Posterior cingulate gyrus (tissue), 11 donors: ENCODE measurements at regions of chr17 and their contacts with region 1.

Region 1: DNA sequence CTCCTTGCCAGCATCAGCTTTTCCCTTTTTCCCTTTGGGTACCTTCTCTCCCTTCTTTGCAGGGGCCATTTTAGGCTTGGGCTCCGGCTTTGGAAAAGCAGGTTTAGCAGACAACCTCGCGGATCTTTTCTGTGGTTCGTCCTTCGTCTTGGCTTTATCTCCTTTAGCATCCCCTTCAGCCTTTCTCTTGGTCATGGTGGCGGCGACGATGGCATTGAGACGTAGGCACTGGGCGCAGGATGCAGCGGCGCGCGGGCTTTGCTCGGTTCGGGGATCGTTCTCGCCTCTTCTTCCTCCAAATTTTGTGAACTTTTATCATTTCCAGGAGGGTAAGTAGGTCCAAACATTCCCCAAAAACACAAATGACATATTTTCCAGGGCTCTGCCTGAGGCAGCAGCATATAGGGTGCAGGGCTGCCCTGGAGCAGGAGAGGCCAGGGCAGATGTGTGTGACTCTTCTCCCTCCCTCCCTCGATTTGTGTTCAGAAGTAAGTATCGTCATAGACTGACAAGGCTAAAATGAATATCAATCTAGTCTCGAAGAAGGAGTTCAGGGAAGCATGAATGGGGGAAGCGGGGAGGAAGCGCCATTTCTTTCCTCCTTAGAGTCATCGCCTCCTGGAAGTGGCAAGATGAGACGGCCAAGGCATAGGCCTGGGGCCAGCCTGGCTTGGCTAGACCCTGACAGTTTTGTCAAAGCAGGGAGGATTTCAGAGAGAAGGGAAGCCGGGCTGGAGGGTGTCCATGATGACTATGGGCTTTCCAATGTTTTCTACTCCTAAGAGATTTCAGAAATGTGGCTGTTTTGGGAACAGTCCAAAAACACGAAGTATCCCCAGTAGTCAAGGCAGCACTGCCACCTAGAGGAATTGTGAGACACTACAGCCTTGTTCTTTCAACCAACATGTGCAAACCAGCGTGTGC is 13.2 kb downstream of the CHCT1 start:
- DNase-seq: peak in 8 of 10 donors; percentile 34 to 86 (median 70)

Region 2: DNA sequence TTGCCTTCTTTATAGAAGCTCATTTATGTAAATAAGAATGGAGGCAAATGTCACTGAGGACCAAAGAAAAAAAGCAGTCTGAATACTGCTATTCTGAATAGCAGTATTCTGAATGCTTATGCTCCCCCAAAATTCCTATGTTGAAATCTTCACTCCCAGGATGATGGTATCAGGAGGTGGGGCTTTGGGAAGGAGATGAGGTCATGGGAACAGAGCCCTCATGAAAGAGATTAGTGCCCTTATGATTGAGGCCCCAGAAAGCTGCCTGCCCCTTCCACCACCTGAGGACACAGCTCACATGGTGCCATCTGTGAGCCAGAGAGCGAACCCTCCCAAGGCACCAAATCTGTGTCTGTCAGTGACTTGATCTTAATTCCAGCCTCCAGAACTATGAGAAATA is 385.6 kb before region 1 on chr17:
- intact Hi-C with region 1: no loop called
- DNase-seq: no peak

Region 3: GRCh38 chr17:60102632-60103096 is 332.8 kb before region 1 on chr17:
- intact Hi-C with region 1: loop called (anchors 10 kb)
- DNase-seq: peak in 4 of 10 donors; percentile 18 to 85 (median 36)

Region 4: DNA sequence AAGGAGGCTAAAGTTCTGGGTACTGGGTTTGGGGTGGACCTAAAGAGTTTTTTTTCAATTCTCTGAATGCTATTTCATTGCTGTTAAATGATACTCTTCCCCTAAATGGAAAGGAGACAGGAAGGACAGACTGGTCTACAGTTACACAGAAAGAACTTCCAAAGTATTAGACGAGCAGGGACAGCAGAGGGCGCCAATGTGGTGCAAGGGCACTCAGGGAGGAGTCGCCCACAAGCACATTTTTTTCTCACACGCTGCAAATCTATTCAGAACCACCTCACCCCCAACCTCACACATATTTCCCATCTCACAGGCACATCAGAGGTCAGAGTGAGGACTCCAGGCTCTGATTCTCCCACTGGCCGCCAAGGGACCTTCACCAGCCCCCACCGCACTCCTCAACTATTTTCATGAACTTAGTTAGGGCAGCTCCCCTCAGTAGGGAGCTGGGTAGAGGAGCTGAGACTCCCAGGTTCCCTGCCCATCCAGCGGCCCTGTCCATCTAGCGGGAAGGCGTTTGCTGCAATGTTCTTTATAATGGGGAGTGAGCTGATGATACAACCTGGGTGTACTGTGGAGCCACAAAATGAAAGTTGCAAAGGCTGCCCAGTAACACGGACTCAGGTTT is 292.5 kb before region 1 on chr17:
- intact Hi-C with region 1: loop called (anchors 10 kb)
- DNase-seq: peak; percentile 59 to 96 (median 88)

Region 5: DNA sequence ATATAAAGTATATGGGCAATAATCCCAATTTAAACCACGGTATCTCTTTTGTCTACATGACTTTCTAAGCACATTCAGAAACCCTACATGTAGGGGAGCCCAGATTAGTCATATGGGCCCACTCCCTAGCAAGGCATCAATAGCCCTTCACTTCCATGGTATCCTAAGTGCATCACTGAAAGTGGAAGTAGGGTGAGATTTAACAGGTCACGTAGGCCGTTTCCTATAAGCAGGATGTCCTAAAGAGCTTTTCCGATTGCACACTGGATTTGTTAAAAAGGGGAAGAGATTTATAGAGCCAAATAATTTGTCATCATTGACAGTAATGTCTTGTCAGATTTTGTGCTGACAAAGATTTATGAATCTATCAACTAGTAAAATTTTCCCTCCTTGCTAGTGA is 246.7 kb before region 1 on chr17:
- intact Hi-C with region 1: no loop called
- DNase-seq: no peak

Region 6: GRCh38 chr17:60231234-60231633 is 204.3 kb before region 1 on chr17:
- intact Hi-C with region 1: loop called (anchors 5 kb)
- DNase-seq: peak in 2 of 10 donors; percentile 11 to 71

Region 7: GRCh38 chr17:60372790-60373483 is 62.6 kb before region 1 on chr17:
- intact Hi-C with region 1: no loop called
- DNase-seq: no peak

Region 8: GRCh38 chr17:60630352-60630751 is 194.8 kb after region 1 on chr17:
- intact Hi-C with region 1: no loop called
- DNase-seq: peak in 7 of 10 donors; percentile 19 to 88 (median 59)